ENCODE measurements at regions of chr3 and their contacts with region 1.

Region 1: GRCh38 chr3:179147873-179148615 is at the start of gene PIK3CA:
- DNase-seq: peak; percentile 78
- ATAC-seq: peak; percentile 74
- H3K4me3 Mint-ChIP-seq: peak within 1 kb of the TSS; percentile 94
- H3K27ac Mint-ChIP-seq: peak within 1 kb of the TSS; percentile 95
- H3K4me1 Mint-ChIP-seq: peaks cover 37% of the 10 kb centered on the region
- H3K27me3 Mint-ChIP-seq: no peaks in the 10 kb centered on the region
- CTCF ChIP-seq: no peak
- total RNA-seq, gene PIK3CA: 32.6 and 40.5 TPM in 2 replicates

Region 2: DNA sequence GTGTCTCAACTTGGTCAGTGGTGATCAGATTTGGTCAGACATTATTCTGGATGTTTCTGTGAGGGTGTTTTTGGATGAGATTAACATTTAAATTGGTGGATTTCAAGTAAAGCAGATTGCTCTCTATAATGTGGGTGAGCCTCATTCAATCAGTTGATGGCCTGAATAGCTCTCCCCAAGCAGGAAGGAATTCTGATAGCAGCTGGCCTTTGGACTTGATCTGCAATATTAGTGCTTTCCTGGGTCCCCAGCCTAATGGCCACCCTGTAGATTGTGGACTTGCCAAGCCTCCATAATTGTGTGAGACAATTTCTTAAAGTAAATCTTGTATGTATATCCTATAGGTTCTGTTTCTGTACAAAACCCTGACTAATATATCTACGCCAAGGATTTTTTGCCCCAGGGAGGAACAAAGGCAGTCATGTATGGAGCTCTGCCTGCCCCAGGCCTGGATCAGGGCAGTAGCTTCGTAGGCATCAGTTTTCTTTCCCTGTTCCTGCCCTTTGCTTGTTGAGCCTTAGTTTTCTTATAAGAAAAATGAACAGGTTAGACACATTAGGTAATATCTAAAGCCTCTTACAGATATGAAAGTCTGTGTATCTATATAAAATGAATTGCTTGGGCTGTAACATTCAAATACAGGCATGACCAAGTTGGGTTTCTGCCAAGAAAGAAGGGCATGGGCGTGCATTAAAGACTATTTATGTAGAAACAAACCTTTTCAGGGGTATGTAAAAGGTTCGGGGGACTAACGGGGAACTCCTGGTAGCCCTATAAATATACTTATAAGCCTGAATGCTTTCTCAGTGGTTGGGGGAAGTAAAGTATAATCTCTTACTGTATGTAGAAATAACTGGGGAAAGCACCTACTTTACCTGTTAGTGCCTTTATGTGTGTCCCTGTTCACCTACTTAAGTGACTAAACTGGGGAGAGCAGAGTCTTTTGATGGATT is 1796.6 kb before region 1 on chr3:
- CTCF ChIA-PET with region 1: no interaction called
- POLR2A ChIA-PET with region 1: no interaction called
- intact Hi-C with region 1: loop called (anchors 5 kb)
- DNase-seq: no peak
- ATAC-seq: peak; percentile 85
- H3K4me3 Mint-ChIP-seq: peak overlapping the region; percentile 74
- H3K27ac Mint-ChIP-seq: peak overlapping the region; percentile 95
- H3K4me1 Mint-ChIP-seq: peaks cover 82% of the 10 kb centered on the region
- H3K27me3 Mint-ChIP-seq: no peaks in the 10 kb centered on the region
- CTCF ChIP-seq: no peak

Region 3: DNA sequence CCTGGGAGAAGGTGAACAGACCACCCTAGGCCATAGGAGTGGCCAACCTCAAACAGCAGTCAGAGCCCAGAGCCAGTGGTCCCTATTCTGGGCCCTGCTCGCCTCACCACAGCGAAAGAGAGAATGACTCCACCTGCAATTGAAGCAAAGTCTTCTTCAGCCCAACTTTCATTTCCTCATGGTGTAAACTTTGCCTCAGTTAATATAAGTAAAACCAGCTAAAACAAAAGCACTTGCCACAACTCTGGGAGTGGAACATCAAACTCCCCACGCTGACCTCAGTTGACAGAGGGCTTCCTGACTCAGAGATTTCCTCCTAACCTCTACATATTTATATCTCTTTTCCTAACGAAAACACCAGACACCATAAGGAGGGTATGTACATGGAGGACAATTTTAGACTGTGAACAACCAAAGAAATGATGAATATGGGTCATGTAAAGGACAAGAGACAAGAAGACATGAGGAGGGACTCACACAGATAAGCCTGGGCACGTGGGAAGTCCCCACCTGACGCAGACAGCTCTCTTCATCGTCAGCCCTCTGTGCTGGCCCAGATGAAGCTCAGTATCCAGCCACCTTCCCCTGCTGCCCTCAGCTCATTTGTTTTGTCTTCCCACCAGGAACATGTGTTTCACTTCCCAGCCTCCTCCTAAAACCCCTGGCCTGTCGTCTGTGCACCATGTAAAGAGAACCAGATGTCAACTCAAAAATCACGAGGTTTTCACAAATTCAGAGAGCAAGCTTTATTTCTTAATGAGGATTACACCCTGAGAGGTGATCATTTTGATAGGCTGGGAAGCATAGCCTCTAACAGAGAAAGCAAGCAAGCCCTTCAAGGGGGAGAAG is 470.9 kb before region 1 on chr3:
- CTCF ChIA-PET with region 1: no interaction called
- POLR2A ChIA-PET with region 1: no interaction called
- intact Hi-C with region 1: no loop called
- DNase-seq: no peak
- ATAC-seq: no peak
- H3K4me3 Mint-ChIP-seq: no peak overlapping the region
- H3K27ac Mint-ChIP-seq: no peak overlapping the region
- H3K4me1 Mint-ChIP-seq: no peaks in the 10 kb centered on the region
- H3K27me3 Mint-ChIP-seq: no peaks in the 10 kb centered on the region
- CTCF ChIP-seq: no peak

Region 4: DNA sequence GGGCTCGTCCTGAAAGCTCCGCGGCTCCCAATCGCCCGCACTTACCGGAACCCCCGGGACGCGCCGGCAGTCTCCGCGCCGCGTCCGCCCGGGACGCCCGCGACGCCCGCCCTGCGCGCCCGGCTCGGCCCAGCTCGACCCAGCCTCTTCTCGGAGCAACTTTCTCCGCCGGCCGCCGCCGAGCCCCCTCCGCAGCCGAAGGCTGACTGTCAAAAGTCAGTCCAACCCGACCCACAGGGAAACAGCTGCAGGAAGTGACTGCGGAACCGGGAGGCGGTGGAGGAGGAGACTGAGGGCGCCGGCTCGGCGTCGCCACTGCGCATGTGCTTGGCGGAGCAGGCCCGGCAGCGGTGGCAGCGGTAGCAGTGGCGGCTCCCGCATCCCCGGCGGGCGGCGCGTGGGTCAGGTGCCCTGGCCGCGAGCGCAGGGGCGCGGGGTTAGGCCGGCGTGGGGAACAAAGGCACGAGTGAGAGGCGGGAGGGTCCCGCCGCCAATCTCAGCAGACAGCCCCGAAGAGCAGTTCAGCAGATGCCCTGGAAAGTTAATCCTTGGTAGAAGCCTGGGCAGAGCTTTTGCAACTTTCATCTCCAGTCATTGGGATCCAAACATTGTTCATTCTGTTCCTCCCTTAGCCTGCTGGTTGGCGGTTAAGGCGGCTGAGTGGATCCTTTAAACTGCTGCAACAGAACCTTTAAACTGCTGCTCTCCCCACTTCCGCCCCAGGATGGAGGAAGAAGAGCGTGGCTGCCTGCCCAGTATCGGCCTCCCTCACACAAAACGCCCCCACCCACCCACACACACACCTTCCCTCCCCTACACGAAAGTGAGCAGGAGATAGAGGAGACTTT is 76.3 kb before region 1 on chr3 and contains the start of gene ZMAT3:
- CTCF ChIA-PET with region 1: interaction called, 3 read pairs
- POLR2A ChIA-PET with region 1: interaction called, 58 read pairs
- intact Hi-C with region 1: loop called (anchors 1 kb)
- DNase-seq: peak; percentile 82
- ATAC-seq: peak; percentile 74
- H3K4me3 Mint-ChIP-seq: peak within 1 kb of the TSS; percentile 96
- H3K27ac Mint-ChIP-seq: peak within 1 kb of the TSS; percentile 91
- H3K4me1 Mint-ChIP-seq: peaks cover 60% of the 10 kb centered on the region
- H3K27me3 Mint-ChIP-seq: no peaks in the 10 kb centered on the region
- CTCF ChIP-seq: no peak
- total RNA-seq, gene ZMAT3: 29.8 and 32.0 TPM in 2 replicates

Region 5: DNA sequence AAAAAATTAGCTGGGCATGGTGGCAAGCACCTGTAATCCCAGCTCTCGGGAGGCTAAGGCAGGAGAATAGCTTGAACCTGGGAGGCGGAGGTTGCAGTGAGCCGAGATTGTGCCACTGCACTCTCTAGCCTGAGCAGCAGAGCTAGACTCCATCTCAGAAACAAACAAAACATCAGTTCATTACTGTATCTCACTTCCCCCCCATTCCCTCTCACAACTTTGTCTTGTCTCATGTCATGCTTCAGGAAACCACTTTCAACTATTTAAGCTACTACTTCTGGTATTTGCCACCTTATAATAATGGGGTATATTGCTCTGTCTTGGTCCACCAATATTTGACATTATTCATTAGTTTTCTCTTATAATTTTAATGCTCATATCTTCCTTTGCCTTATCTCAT is 26.3 kb after region 1 on chr3:
- CTCF ChIA-PET with region 1: no interaction called
- POLR2A ChIA-PET with region 1: interaction called, 21 read pairs
- intact Hi-C with region 1: no loop called
- DNase-seq: no peak
- ATAC-seq: peak; percentile 60
- H3K4me3 Mint-ChIP-seq: peak overlapping the region; percentile 48
- H3K27ac Mint-ChIP-seq: peak overlapping the region; percentile 31
- H3K4me1 Mint-ChIP-seq: peaks cover 57% of the 10 kb centered on the region
- H3K27me3 Mint-ChIP-seq: no peaks in the 10 kb centered on the region
- CTCF ChIP-seq: no peak

Region 6: GRCh38 chr3:179260949-179261765 is 113.1 kb after region 1 on chr3:
- CTCF ChIA-PET with region 1: no interaction called
- POLR2A ChIA-PET with region 1: interaction called, 27 read pairs
- intact Hi-C with region 1: loop called (anchors 1 kb)
- DNase-seq: peak; percentile 75
- ATAC-seq: peak; percentile 88
- H3K4me3 Mint-ChIP-seq: peak overlapping the region; percentile 84
- H3K27ac Mint-ChIP-seq: peak overlapping the region; percentile 71
- H3K4me1 Mint-ChIP-seq: peaks cover 53% of the 10 kb centered on the region
- H3K27me3 Mint-ChIP-seq: no peaks in the 10 kb centered on the region
- CTCF ChIP-seq: no peak

Region 7: DNA sequence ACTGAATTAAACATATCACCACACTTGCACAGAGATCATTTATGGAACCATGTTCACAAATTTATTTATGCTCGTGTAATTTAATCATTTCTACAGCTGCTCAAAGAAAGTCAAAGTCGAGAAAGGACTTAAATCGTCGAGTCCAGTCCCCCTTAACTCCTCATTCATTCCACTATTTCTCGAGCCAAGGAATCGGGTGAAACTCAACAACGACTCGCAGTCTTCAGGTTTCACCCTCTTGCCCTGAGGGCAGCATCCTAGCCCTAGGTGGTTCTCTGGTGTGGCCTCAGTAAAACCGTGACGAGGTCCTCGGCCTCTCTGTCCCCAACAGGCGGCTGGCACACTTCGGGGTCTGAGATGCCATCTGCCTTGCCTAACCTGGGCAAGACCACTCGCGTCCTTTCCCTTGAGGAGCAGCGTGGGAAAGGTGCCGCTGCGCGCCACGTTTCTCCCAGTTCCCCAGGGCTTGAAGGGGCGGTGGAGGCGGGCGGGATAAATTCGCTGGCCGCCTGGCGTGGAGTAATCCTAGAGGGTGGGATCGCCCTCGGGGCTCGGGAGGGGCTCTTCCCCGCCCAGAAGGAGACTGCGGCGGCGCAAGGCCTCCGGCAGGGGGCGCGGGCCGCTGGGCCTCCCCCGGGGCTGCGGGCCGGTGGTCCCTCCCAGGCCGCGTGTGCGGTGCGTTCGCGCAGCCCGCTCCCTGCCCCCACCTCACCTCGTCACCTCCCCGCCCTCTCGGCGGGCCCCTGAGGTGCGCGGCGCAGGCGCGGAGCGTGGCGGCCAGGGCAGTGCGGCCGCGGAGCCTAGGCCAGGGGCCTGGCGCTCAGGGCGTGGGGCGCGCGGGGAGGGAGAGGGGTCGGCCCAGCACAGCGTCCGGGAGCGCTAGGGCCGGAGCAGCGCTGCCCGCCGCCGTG is 174.5 kb after region 1 on chr3 and contains the start of gene ZNF639:
- CTCF ChIA-PET with region 1: interaction called, 7 read pairs
- POLR2A ChIA-PET with region 1: interaction called, 26 read pairs
- intact Hi-C with region 1: loop called (anchors 1 kb)
- DNase-seq: peak; percentile 89
- ATAC-seq: peak; percentile 88
- H3K4me3 Mint-ChIP-seq: peak within 1 kb of the TSS; percentile 87
- H3K27ac Mint-ChIP-seq: peak within 1 kb of the TSS; percentile 89
- H3K4me1 Mint-ChIP-seq: peaks cover 36% of the 10 kb centered on the region
- H3K27me3 Mint-ChIP-seq: no peaks in the 10 kb centered on the region
- CTCF ChIP-seq: peak; percentile 57
- total RNA-seq, gene ZNF639: 37.1 and 41.4 TPM in 2 replicates

Region 8: GRCh38 chr3:179562591-179563270 is 414.7 kb after region 1 on chr3 and contains the start of gene ACTL6A:
- CTCF ChIA-PET with region 1: no interaction called
- POLR2A ChIA-PET with region 1: interaction called, 8 read pairs
- intact Hi-C with region 1: loop called (anchors 1 kb)
- DNase-seq: peak; percentile 94
- ATAC-seq: peak; percentile 92
- H3K4me3 Mint-ChIP-seq: peak within 1 kb of the TSS; percentile 99
- H3K27ac Mint-ChIP-seq: peak within 1 kb of the TSS; percentile 97
- H3K4me1 Mint-ChIP-seq: peaks cover 24% of the 10 kb centered on the region
- H3K27me3 Mint-ChIP-seq: no peaks in the 10 kb centered on the region
- CTCF ChIP-seq: no peak
- total RNA-seq, gene ACTL6A: 55.0 and 58.2 TPM in 2 replicates